Heart right ventricle (tissue), 16 donors: ENCODE measurements at regions of chr2 and their contacts with region 1.

Region 1: DNA sequence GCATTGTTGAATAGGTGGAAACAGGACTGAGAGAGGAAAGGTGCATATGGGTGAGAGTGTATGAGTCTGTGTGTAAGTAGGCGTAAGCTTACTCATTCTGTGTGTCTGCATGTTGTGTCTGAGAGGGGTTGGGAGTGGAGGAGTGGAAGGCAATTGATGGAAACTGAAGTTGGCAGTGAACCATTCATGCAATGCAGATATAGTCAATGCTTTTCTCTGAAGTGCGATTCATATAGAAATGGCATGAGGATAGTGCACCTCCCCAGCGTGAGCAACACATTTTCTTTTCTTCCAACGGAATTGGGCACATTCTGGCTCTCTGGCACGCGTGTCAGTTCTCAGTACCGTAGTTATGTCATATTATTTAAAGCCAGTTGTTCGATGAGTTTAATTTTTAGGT is 250.5 kb downstream of the NYAP2 start:
- DNase-seq: no peak
- ATAC-seq: no peak
- H3K4me3 ChIP-seq: no peak overlapping the region
- H3K27ac ChIP-seq: no peak overlapping the region
- H3K4me1 ChIP-seq: no peaks in the 10 kb centered on the region
- H3K27me3 ChIP-seq: peaks cover 0 to 23% (median 6%) of the 10 kb centered on the region in 7 donors
- CTCF ChIP-seq: no peak

Region 2: DNA sequence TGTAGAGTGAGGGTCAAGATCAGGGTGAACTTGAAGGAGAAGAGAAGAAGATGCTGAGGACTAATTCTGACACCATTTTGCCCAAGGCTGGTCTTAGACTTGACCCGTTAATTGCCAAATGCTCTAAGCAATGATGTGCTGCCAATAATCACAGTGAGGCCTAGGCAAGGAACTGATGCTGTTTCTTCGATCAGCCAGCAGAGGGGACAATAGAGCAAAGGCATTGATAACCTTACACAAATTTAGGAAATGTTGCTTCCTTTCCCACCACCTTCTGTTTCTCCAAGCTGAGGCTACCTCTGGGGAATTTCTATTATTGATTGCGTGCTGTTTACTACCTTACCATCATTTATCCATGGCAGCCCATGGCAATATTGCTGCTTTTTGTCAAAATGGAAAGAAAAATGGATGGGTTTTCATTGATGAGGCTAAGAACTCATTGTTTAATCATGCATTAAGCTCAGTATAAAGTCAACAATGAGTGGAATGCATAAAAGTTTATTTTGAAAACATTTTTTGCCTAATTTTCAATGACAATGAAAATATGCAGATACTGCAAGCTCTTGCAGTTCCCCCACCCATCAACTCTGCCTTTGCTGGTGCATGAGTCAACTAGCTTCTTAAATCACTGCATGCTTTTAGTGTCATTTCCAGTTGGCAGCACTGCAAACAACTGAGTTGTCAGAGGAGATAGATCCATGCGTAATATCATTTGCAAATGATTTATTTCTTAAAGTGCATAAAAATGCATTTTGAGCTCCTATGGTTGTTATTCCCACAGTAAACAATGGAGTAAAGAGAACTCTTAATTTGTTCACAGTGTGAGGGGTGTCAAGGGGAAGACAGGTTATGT is 367.0 kb before region 1 on chr2:
- intact Hi-C with region 1: loop called in 1 of 10 experiments (anchors 10 kb)
- DNase-seq: no peak
- ATAC-seq: no peak
- H3K4me3 ChIP-seq: no peak overlapping the region
- H3K27ac ChIP-seq: no peak overlapping the region
- H3K4me1 ChIP-seq: no peaks in the 10 kb centered on the region
- H3K27me3 ChIP-seq: no peaks in the 10 kb centered on the region
- CTCF ChIP-seq: peak in 7 of 9 donors; percentile 22 to 65 (median 34)

Region 3: GRCh38 chr2:225526760-225527390 is 123.2 kb before region 1 on chr2:
- intact Hi-C with region 1: no loop called
- DNase-seq: no peak
- ATAC-seq: no peak
- H3K4me3 ChIP-seq: no peak overlapping the region
- H3K27ac ChIP-seq: no peak overlapping the region
- H3K4me1 ChIP-seq: no peaks in the 10 kb centered on the region
- H3K27me3 ChIP-seq: no peaks in the 10 kb centered on the region
- CTCF ChIP-seq: no peak

Region 4: DNA sequence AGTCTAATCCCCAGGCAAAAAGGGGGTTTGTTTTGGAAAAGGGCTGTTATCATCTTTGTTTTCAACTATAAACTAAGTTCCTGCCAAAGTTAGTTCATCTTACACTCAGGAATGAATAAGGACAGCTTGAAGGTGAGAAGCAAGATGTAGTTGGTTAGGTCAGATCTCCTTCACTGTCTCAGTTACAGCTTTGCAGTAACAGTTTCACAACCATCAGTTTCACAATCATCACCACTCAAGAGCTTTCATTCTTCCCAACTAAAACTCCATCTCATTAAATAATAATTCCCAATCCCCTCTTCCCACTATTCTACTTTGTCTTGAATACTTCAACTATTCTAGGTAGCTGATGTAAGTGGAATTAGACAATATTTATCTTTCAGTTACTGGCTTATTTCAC is 49.6 kb before region 1 on chr2:
- intact Hi-C with region 1: no loop called
- DNase-seq: no peak
- ATAC-seq: no peak
- H3K4me3 ChIP-seq: no peak overlapping the region
- H3K27ac ChIP-seq: no peak overlapping the region
- H3K4me1 ChIP-seq: no peaks in the 10 kb centered on the region
- H3K27me3 ChIP-seq: no peaks in the 10 kb centered on the region
- CTCF ChIP-seq: no peak

Region 5: GRCh38 chr2:226020176-226020575 is 370.1 kb after region 1 on chr2:
- intact Hi-C with region 1: no loop called
- DNase-seq: no peak
- ATAC-seq: no peak
- H3K4me3 ChIP-seq: no peak overlapping the region
- H3K27ac ChIP-seq: no peak overlapping the region
- H3K4me1 ChIP-seq: no peaks in the 10 kb centered on the region
- H3K27me3 ChIP-seq: no peaks in the 10 kb centered on the region
- CTCF ChIP-seq: no peak